Naive thymus-derived CD4-positive, alpha-beta T cell (primary cell): ENCODE measurements at regions of chr6 and their contacts with region 1.

Region 1: GRCh38 chr6:144149891-144150709 is at the start of gene STX11:
- DNase-seq: peak; percentile 37 to 88 (median 51)
- ATAC-seq: peak; percentile 86
- H3K4me3 ChIP-seq: peak within 1 kb of the TSS; percentile 69
- H3K4me3 Mint-ChIP-seq: peak within 1 kb of the TSS; percentile 91 to 98 (median 95)
- H3K27ac ChIP-seq: peak within 1 kb of the TSS; percentile 62
- H3K27ac Mint-ChIP-seq: peak within 1 kb of the TSS; percentile 89 to 98 (median 94)
- H3K4me1 ChIP-seq: peaks cover 0 to 17% of the 10 kb centered on the region in 2 donors
- H3K4me1 Mint-ChIP-seq: peaks cover 6 to 43% (median 15%) of the 10 kb centered on the region in 7 donors
- H3K27me3 ChIP-seq: no peaks in the 10 kb centered on the region
- H3K27me3 Mint-ChIP-seq: peaks cover 0 to 2% (median 0%) of the 10 kb centered on the region in 5 donors
- total RNA-seq, gene STX11: 2.6 to 60.5 (median 11.6) TPM

Region 2: GRCh38 chr6:142935553-142936517 is 1214.3 kb before region 1 on chr6:
- CTCF ChIA-PET with region 1: no interaction called
- POLR2A ChIA-PET with region 1: no interaction called
- intact Hi-C with region 1: loop called in 1 of 2 experiments (anchors 10 kb)
- DNase-seq: no peak
- ATAC-seq: peak; percentile 60
- H3K4me3 ChIP-seq: peak overlapping the region; percentile 21
- H3K4me3 Mint-ChIP-seq: peak overlapping the region; percentile 71 to 98 (median 82)
- H3K27ac ChIP-seq: peak overlapping the region; percentile 59
- H3K27ac Mint-ChIP-seq: peak overlapping the region; percentile 49 to 100 (median 86)
- H3K4me1 ChIP-seq: peaks cover 68 to 84% of the 10 kb centered on the region in 2 donors
- H3K4me1 Mint-ChIP-seq: peaks cover 54 to 99% (median 97%) of the 10 kb centered on the region in 7 donors
- H3K27me3 ChIP-seq: no peaks in the 10 kb centered on the region
- H3K27me3 Mint-ChIP-seq: no peaks in the 10 kb centered on the region

Region 3: GRCh38 chr6:143536865-143537691 is 613.0 kb before region 1 on chr6:
- CTCF ChIA-PET with region 1: no interaction called
- POLR2A ChIA-PET with region 1: no interaction called
- intact Hi-C with region 1: loop called in 1 of 2 experiments (anchors 2 kb)
- DNase-seq: peak; percentile 37 to 69 (median 57)
- ATAC-seq: peak; percentile 83
- H3K4me3 ChIP-seq: peak overlapping the region; percentile 74
- H3K4me3 Mint-ChIP-seq: peak overlapping the region; percentile 81 to 92 (median 84)
- H3K27ac ChIP-seq: peak overlapping the region; percentile 60
- H3K27ac Mint-ChIP-seq: peak overlapping the region in 7 of 9 donors; percentile 59 to 89 (median 76)
- H3K4me1 ChIP-seq: peaks cover 27 to 28% of the 10 kb centered on the region in 2 donors
- H3K4me1 Mint-ChIP-seq: peaks cover 17 to 47% (median 37%) of the 10 kb centered on the region in 7 donors
- H3K27me3 ChIP-seq: no peaks in the 10 kb centered on the region
- H3K27me3 Mint-ChIP-seq: no peaks in the 10 kb centered on the region

Region 4: GRCh38 chr6:144055121-144055931 is 94.8 kb before region 1 on chr6:
- CTCF ChIA-PET with region 1: no interaction called
- POLR2A ChIA-PET with region 1: no interaction called
- intact Hi-C with region 1: loop called in 1 of 2 experiments (anchors 2 kb)
- DNase-seq: peak in 7 of 9 donors; percentile 49 to 76 (median 66)
- ATAC-seq: peak; percentile 96
- H3K4me3 ChIP-seq: peak overlapping the region; percentile 52
- H3K4me3 Mint-ChIP-seq: peak overlapping the region; percentile 74 to 93 (median 87)
- H3K27ac ChIP-seq: peak overlapping the region; percentile 66
- H3K27ac Mint-ChIP-seq: peak overlapping the region; percentile 78 to 99 (median 93)
- H3K4me1 ChIP-seq: peaks cover 12 to 23% of the 10 kb centered on the region in 2 donors
- H3K4me1 Mint-ChIP-seq: peaks cover 24 to 42% (median 31%) of the 10 kb centered on the region in 7 donors
- H3K27me3 ChIP-seq: no peaks in the 10 kb centered on the region
- H3K27me3 Mint-ChIP-seq: no peaks in the 10 kb centered on the region

Region 5: GRCh38 chr6:144104898-144105487 is 45.1 kb before region 1 on chr6:
- CTCF ChIA-PET with region 1: no interaction called
- POLR2A ChIA-PET with region 1: no interaction called
- intact Hi-C with region 1: loop called (anchors 1 to 2 kb)
- DNase-seq: peak in 7 of 9 donors; percentile 30 to 67 (median 61)
- ATAC-seq: peak; percentile 88
- H3K4me3 ChIP-seq: no peak overlapping the region
- H3K4me3 Mint-ChIP-seq: no peak overlapping the region
- H3K27ac ChIP-seq: no peak overlapping the region
- H3K27ac Mint-ChIP-seq: peak overlapping the region in 1 of 9 donors; percentile 29
- H3K4me1 ChIP-seq: no peaks in the 10 kb centered on the region
- H3K4me1 Mint-ChIP-seq: peaks cover 0 to 7% (median 4%) of the 10 kb centered on the region in 7 donors
- H3K27me3 ChIP-seq: no peaks in the 10 kb centered on the region
- H3K27me3 Mint-ChIP-seq: peaks cover 0 to 6% (median 0%) of the 10 kb centered on the region in 5 donors

Region 6: GRCh38 chr6:144334131-144334708 is 184.1 kb after region 1 on chr6:
- CTCF ChIA-PET with region 1: no interaction called
- POLR2A ChIA-PET with region 1: no interaction called
- intact Hi-C with region 1: loop called in 1 of 2 experiments (anchors 1 kb)
- DNase-seq: peak; percentile 24 to 87 (median 83)
- ATAC-seq: peak; percentile 91
- H3K4me3 ChIP-seq: peak overlapping the region; percentile 59
- H3K4me3 Mint-ChIP-seq: peak overlapping the region; percentile 80 to 93 (median 86)
- H3K27ac ChIP-seq: peak overlapping the region; percentile 75
- H3K27ac Mint-ChIP-seq: peak overlapping the region; percentile 87 to 98 (median 96)
- H3K4me1 ChIP-seq: peaks cover 34 to 41% of the 10 kb centered on the region in 2 donors
- H3K4me1 Mint-ChIP-seq: peaks cover 40 to 74% (median 59%) of the 10 kb centered on the region in 7 donors
- H3K27me3 ChIP-seq: no peaks in the 10 kb centered on the region
- H3K27me3 Mint-ChIP-seq: no peaks in the 10 kb centered on the region

Region 7: DNA sequence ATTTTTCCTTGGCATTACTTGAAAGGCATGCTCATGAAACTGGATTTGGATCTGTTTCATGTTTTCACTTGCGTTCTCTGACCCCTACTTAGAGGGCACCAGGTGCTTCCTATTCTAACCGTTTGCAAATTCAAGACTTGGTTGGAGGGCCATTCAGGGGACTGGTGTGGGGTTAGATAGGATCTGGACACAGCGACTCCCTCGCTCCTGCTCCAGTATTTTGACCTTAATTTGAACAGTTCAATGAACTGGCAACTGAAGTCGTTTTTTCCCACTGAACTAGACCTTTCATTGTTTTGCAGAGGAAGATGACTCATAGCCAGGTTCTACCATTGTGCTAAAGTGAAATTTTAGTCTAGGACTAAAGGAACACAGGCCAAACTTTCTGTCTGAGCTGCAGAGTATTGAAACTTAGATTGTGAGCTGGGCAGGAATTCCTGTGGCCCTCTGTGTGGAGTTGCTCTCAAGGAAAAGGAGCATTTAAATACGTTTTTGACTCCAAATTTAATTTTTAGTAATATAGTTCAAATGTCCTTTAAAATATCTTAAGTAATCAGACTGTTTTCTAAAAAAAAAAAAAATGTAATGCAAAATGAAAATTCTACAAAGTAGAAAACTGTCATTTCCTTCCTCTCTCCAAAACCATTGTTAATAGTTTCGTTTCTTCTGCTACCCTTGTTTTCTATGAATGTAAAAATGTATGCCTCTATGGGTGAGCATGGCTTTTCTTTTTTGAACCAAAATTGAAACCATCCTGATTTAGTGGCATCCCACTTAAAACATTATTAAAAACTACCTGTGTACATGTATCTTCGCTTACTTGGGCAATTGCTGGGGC is 199.8 kb after region 1 on chr6:
- CTCF ChIA-PET with region 1: no interaction called
- POLR2A ChIA-PET with region 1: interaction called, 4 read pairs
- intact Hi-C with region 1: loop called (anchors 2 kb)
- DNase-seq: peak in 6 of 9 donors; percentile 30 to 55 (median 46)
- ATAC-seq: peak; percentile 59
- H3K4me3 ChIP-seq: peak overlapping the region; percentile 53
- H3K4me3 Mint-ChIP-seq: peak overlapping the region; percentile 72 to 97 (median 86)
- H3K27ac ChIP-seq: peak overlapping the region; percentile 76
- H3K27ac Mint-ChIP-seq: peak overlapping the region; percentile 84 to 99 (median 96)
- H3K4me1 ChIP-seq: peaks cover 76 to 87% of the 10 kb centered on the region in 2 donors
- H3K4me1 Mint-ChIP-seq: peaks cover 74 to 95% (median 81%) of the 10 kb centered on the region in 7 donors
- H3K27me3 ChIP-seq: no peaks in the 10 kb centered on the region
- H3K27me3 Mint-ChIP-seq: no peaks in the 10 kb centered on the region